Esophagus muscularis mucosa (tissue), 4 donors: ENCODE measurements at regions of chr9 and their contacts with region 1.

Region 1: DNA sequence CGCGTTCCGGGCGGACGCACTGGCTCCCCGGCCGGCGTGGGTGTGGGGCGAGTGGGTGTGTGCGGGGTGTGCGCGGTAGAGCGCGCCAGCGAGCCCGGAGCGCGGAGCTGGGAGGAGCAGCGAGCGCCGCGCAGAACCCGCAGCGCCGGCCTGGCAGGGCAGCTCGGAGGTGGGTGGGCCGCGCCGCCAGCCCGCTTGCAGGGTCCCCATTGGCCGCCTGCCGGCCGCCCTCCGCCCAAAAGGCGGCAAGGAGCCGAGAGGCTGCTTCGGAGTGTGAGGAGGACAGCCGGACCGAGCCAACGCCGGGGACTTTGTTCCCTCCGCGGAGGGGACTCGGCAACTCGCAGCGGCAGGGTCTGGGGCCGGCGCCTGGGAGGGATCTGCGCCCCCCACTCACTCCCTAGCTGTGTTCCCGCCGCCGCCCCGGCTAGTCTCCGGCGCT is at the start of gene DAPK1:
- DNase-seq: no peak
- H3K4me3 ChIP-seq: peak within 1 kb of the TSS; percentile 77 to 98 (median 95)
- H3K27ac ChIP-seq: peak within 1 kb of the TSS; percentile 88 to 94 (median 93)
- H3K4me1 ChIP-seq: peaks cover 6 to 43% (median 37%) of the 10 kb centered on the region in 4 donors
- H3K27me3 ChIP-seq: peaks cover 0 to 4% (median 0%) of the 10 kb centered on the region in 4 donors
- CTCF ChIP-seq: peak; percentile 27 to 44 (median 31)
- EP300 ChIP-seq: no peak
- POLR2A ChIP-seq: peak; percentile 19
- total RNA-seq, gene DAPK1: 51.7 to 96.8 (median 80.7) TPM

Region 2: GRCh38 chr9:87428646-87429045 is 69.0 kb before region 1 on chr9:
- intact Hi-C with region 1: no loop called
- DNase-seq: no peak
- H3K4me3 ChIP-seq: no peak overlapping the region
- H3K27ac ChIP-seq: no peak overlapping the region
- H3K4me1 ChIP-seq: no peaks in the 10 kb centered on the region
- H3K27me3 ChIP-seq: no peaks in the 10 kb centered on the region
- CTCF ChIP-seq: no peak
- EP300 ChIP-seq: no peak
- POLR2A ChIP-seq: no peak

Region 3: DNA sequence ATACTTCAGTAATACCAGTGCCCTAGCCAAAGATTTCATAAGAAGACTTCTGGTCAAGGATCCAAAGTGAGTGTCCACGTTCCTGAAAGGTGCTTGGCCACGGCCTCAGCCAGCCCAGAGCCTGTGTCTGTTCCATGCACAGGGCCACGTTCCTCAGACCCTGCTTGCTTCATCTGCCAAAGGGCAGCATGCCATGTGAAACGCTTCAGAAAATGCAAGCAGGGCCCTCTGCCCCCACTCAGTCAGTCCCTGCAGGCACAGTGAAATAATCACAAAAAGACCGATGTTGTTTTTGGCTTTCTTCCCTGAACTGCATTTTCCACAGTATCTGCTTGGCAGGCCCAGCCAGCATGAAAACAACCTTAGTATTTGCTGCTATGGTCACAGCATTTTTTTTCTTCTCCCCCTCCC is 142.8 kb after region 1 on chr9:
- intact Hi-C with region 1: loop called (anchors 5 kb)
- DNase-seq: no peak
- H3K4me3 ChIP-seq: no peak overlapping the region
- H3K27ac ChIP-seq: peak overlapping the region; percentile 53 to 72 (median 68)
- H3K4me1 ChIP-seq: peaks cover 5 to 64% (median 51%) of the 10 kb centered on the region in 4 donors
- H3K27me3 ChIP-seq: no peaks in the 10 kb centered on the region
- CTCF ChIP-seq: no peak
- EP300 ChIP-seq: no peak
- POLR2A ChIP-seq: no peak

Region 4: DNA sequence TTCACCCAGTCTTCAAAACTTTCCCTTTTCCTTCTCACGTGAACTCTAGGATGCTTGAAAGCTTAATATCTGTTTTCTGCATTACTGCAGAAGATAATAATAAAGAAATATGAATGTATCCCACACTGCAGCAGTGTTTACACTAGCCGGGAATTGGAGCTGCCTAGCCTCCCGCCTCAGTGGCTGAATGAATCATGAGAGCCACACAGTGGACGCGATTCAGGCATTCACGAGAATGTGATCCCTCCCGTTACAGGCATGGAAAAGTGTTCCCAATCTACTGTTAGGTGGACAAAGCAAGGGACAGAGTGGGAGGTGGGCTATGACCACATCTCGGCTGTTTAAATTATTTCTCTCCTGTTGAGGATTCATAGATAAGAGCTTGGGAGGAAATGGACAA is 158.9 kb after region 1 on chr9:
- intact Hi-C with region 1: loop called (anchors 5 kb)
- DNase-seq: no peak
- H3K4me3 ChIP-seq: no peak overlapping the region
- H3K27ac ChIP-seq: peak overlapping the region in 3 of 4 donors; percentile 29 to 44 (median 34)
- H3K4me1 ChIP-seq: peaks cover 0 to 29% (median 27%) of the 10 kb centered on the region in 4 donors
- H3K27me3 ChIP-seq: no peaks in the 10 kb centered on the region
- CTCF ChIP-seq: peak; percentile 46 to 49 (median 46)
- EP300 ChIP-seq: no peak
- POLR2A ChIP-seq: no peak

Region 5: GRCh38 chr9:87667202-87667601 is 169.6 kb after region 1 on chr9:
- intact Hi-C with region 1: no loop called
- DNase-seq: peak; percentile 39
- H3K4me3 ChIP-seq: no peak overlapping the region
- H3K27ac ChIP-seq: no peak overlapping the region
- H3K4me1 ChIP-seq: peaks cover 0 to 19% (median 11%) of the 10 kb centered on the region in 4 donors
- H3K27me3 ChIP-seq: no peaks in the 10 kb centered on the region
- CTCF ChIP-seq: peak in 1 of 3 experiments; percentile 29
- EP300 ChIP-seq: no peak
- POLR2A ChIP-seq: no peak